Activated CD8-positive, alpha-beta T cell treated with anti-CD3 and anti-CD28 coated beads for 36 hours (primary cell): ENCODE measurements at regions of chr17 and their contacts with region 1.

Region 1: DNA sequence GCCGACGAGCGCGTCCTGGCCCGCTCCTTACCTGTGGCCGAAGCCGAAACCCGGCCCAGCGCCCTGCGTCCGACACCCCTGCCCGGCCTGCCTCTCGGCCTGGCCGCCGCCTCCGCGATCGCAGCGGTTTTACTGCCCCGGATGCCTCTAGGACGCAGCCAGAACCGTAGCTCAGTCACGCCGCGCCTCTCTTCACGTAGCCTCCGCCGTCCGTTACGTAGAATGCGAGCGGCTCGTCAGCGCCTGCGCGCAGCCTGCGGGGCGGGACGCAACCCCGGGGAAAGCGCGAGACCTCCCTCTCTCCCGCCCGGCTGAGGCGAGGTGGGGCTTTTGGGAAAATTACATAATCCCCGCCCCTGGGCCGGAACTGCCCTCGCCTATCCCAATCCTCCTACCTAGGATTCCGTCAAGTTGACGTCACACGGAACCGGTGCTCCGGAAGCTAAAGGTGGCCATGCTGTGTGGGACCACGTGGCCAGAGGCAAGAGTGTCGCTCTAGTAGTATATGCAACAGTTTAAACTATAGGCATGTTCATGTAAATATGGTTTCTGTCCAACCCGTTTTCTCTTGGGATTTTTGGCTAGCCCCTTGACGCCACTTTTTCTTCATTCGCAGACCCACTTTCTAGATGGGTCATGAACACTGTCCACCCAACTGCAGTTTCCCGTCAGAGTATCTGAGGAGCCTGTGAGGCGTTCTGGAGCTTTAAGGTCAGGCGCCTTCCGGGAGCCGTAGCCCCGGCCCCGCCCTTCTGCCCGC is at the start of gene CCDC47:
- DNase-seq: peak; percentile 98
- ATAC-seq: peak; percentile 86
- H3K4me3 Mint-ChIP-seq: peak within 1 kb of the TSS; percentile 88
- H3K27ac Mint-ChIP-seq: peak within 1 kb of the TSS; percentile 100
- H3K4me1 Mint-ChIP-seq: peaks cover 48% of the 10 kb centered on the region
- H3K27me3 Mint-ChIP-seq: no peaks in the 10 kb centered on the region
- CTCF ChIP-seq: no peak
- total RNA-seq, gene CCDC47: 63.0 to 64.4 TPM

Region 2: DNA sequence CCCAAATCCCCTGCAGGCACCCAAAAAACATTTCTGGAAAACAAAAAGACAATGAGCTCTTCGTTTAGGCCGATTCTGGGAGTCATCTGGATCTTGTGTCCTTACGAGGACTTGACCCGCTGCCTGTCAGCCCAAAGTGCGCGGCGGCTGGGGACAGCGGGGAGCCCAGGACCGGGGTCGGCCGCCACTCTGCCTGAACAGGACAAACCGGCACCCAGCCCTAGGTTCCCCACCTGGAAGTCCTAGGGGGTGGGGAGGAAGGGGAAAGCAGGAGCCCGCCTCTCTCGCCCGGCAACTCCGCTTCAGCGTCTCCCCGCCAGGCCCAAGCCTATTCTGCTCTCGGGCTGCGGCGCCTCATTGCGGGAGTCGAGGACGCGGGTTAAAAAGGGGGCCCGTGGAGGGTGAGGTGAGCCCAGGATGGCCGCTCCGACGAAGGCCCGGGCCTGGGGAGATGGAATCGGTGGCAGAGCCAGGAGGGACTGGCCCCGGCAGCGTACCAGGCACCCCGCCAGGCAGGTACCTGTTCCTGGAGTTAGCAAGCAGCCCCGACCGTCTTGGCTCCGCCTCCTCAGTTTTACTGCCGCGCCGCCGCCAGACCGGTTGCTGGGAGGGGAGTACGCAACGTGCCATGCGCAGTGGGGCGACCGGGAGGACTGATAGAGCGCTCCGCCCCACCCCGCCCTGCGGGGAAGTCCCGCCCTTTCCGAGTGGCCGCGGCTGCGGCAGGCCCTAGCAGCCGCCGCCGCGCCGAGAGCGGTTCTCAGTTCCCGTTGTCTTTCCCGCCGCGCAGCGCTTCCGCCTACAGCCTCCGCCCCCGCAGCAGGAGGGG is 32.1 kb before region 1 on chr17 and contains the start of gene STRADA:
- CTCF ChIA-PET with region 1: interaction called, 3 read pairs
- POLR2A ChIA-PET with region 1: interaction called, 25 read pairs
- intact Hi-C with region 1: loop called (anchors 2 kb)
- DNase-seq: peak; percentile 99
- ATAC-seq: peak; percentile 96
- H3K4me3 Mint-ChIP-seq: peak within 1 kb of the TSS; percentile 94
- H3K27ac Mint-ChIP-seq: peak within 1 kb of the TSS; percentile 96
- H3K4me1 Mint-ChIP-seq: peaks cover 21% of the 10 kb centered on the region
- H3K27me3 Mint-ChIP-seq: no peaks in the 10 kb centered on the region
- CTCF ChIP-seq: no peak
- total RNA-seq, gene STRADA: 44.8 to 48.8 TPM

Region 3: DNA sequence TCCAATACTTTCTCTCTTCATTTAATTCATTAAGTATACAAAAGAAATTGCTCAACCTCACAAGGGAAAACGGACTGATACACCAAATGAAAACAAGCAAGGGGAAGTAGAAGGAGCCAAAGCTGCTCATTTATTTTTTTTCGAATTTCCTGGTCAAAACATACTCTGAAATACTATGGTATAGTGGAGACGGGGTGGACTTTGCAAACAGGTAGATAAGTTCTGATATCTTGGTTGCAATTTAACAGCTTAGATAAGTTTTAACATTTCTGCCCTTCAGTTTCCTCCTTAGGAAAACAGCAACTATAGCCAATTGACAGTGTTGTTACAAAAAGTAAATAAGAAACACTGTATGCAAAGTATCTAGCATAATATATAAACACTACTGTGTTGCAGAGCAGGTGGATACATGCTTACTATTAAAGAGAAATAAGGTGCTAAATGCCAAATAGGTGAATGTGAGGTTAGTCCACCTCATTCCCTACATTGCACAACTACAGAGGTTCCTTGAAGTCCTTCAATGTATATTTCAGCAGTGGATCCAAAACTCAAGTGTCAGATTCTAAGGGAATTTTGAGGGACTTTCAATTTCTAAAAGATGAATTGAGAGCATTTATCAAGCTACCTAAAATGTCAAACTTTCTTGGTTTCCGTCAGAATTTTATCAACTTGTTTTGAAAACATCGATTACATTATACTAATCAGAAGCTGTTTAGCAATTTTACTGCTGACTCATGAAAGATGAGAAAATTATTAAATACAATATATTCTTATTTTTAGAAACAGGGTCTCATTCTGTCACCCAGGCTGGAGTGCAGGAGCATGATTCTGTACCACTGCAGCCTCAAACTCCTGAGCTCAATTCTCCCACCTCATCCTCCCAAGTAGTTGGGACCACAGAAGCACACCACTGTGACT is 11.1 kb before region 1 on chr17:
- CTCF ChIA-PET with region 1: interaction called, 6 read pairs
- POLR2A ChIA-PET with region 1: interaction called, 13 read pairs
- intact Hi-C with region 1: no loop called
- DNase-seq: no peak
- ATAC-seq: no peak
- H3K4me3 Mint-ChIP-seq: no peak overlapping the region
- H3K27ac Mint-ChIP-seq: no peak overlapping the region
- H3K4me1 Mint-ChIP-seq: peaks cover 22% of the 10 kb centered on the region
- H3K27me3 Mint-ChIP-seq: no peaks in the 10 kb centered on the region
- CTCF ChIP-seq: no peak

Region 4: DNA sequence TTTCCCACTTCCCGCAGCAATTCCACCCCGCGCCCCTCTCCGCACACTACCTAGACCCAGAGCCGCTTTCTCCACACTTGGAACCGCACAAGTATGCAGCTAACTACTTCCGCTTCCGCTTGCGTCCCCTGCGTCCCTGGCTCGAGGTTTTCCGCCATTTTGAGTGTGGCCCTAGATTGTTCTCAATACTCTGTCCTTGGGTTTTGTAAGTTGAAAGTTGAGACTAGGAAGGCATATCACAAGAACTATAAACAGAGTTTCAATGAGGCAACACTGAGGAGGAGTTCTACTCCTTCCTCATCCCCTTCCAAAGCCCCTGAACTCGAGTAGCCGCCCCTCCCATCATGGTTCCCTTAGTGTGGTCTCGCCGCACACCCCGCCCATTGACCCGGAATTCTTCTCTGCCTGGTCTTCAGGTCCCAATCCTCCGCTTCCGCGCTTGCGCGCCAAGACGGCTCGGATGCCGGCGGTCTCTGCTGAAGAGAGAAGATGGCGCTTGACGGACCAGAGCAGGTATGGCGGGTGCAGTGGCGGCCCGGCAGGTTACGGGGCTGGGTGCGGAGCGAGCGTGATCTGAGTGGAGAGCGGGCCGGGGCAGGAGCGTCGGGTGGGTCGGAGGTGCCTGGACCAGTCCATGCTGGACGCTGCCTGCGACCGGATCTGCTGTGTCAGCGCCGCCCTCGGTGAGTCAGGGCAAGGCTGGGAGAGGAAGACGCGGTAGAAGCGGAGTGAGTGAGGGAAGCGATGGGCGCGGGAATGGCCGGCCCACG is 53.6 kb after region 1 on chr17 and contains the starts of genes FTSJ3 and PSMC5:
- CTCF ChIA-PET with region 1: interaction called, 5 read pairs
- POLR2A ChIA-PET with region 1: interaction called, 42 read pairs
- intact Hi-C with region 1: loop called (anchors 5 kb)
- DNase-seq: peak; percentile 98
- ATAC-seq: peak; percentile 94
- H3K4me3 Mint-ChIP-seq: peak within 1 kb of the TSS; percentile 100
- H3K27ac Mint-ChIP-seq: peak within 1 kb of the TSS; percentile 100
- H3K4me1 Mint-ChIP-seq: peaks cover 78% of the 10 kb centered on the region
- H3K27me3 Mint-ChIP-seq: no peaks in the 10 kb centered on the region
- CTCF ChIP-seq: peak; percentile 50
- total RNA-seq, gene FTSJ3: 58.3 to 60.9 TPM
- total RNA-seq, gene PSMC5: 155 to 157 TPM

Region 5: GRCh38 chr17:63848834-63849700 is 75.5 kb after region 1 on chr17:
- CTCF ChIA-PET with region 1: interaction called, 4 read pairs
- POLR2A ChIA-PET with region 1: interaction called, 11 read pairs
- intact Hi-C with region 1: no loop called
- DNase-seq: peak; percentile 98
- ATAC-seq: peak; percentile 98
- H3K4me3 Mint-ChIP-seq: peak overlapping the region; percentile 64
- H3K27ac Mint-ChIP-seq: peak overlapping the region; percentile 95
- H3K4me1 Mint-ChIP-seq: peaks cover 16% of the 10 kb centered on the region
- H3K27me3 Mint-ChIP-seq: no peaks in the 10 kb centered on the region
- CTCF ChIP-seq: peak; percentile 84